Right ventricle myocardium inferior (tissue), 1 donor: ENCODE measurements at regions of chr1 and their contacts with region 1.

Region 1: GRCh38 chr1:33972676-33973395 is 109.0 kb downstream of the HMGB4 start:
- DNase-seq: peak; percentile 83
- ATAC-seq: peak; percentile 91

Region 2: DNA sequence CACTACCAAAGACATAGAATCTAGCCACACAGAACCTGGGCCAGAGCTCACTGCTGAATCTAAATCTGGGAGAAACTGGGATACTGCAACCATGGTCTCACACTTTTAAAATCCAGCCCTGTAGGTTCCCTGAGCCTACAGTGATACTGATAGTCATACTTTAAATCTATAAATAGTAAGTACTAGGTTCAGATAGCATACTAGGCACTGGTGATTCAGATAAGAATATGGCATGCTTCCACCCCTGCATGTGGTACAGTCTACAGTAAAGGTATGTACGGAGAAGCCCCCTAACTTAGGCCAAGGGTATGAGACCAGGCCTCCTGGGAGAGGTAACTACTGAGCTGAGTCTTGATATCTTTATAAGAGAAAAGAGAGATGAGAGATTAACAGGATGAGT is 302.3 kb before region 1 on chr1:
- intact Hi-C with region 1: no loop called
- DNase-seq: no peak
- ATAC-seq: peak; percentile 68

Region 3: DNA sequence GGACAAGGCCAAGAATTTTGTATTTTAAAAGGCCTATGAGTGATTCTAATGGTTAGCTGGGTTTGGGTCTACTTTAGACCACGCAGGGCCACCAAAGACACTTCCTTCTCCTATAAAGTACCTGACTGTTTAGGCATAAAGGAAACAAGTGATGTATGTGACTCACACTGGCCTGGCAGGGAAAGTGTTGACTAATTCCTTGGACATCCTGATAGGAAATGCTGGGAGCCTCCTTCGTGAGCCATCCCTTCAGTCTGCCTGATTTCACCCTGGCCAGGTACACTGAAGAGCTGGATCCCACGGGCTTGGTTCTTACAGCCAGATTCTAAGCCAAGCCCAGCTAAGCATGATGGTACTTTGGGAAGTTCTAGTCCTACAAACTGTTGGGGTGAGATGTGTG is 209.4 kb before region 1 on chr1:
- intact Hi-C with region 1: loop called (anchors 10 kb)
- DNase-seq: no peak
- ATAC-seq: no peak

Region 4: GRCh38 chr1:34013958-34014737 is 41.3 kb after region 1 on chr1:
- intact Hi-C with region 1: loop called (anchors 5 kb)
- DNase-seq: no peak
- ATAC-seq: peak; percentile 76

Region 5: GRCh38 chr1:34057347-34058130 is 84.7 kb after region 1 on chr1:
- intact Hi-C with region 1: loop called (anchors 5 kb)
- DNase-seq: peak; percentile 71
- ATAC-seq: peak; percentile 92